Pancreas (tissue), 10 donors: ENCODE measurements at regions of chr11 and their contacts with region 1.

Region 1: GRCh38 chr11:61174949-61175348 is 13.7 kb upstream of the VPS37C start:
- DNase-seq: no peak
- ATAC-seq: peak in 2 of 4 donors; percentile 50 to 59
- H3K4me3 ChIP-seq: no peak overlapping the region
- H3K27ac ChIP-seq: peak overlapping the region in 2 of 4 donors; percentile 32 to 60
- H3K4me1 ChIP-seq: peaks cover 0 to 18% (median 0%) of the 10 kb centered on the region in 3 donors
- H3K27me3 ChIP-seq: no peaks in the 10 kb centered on the region
- CTCF ChIP-seq: no peak

Region 2: DNA sequence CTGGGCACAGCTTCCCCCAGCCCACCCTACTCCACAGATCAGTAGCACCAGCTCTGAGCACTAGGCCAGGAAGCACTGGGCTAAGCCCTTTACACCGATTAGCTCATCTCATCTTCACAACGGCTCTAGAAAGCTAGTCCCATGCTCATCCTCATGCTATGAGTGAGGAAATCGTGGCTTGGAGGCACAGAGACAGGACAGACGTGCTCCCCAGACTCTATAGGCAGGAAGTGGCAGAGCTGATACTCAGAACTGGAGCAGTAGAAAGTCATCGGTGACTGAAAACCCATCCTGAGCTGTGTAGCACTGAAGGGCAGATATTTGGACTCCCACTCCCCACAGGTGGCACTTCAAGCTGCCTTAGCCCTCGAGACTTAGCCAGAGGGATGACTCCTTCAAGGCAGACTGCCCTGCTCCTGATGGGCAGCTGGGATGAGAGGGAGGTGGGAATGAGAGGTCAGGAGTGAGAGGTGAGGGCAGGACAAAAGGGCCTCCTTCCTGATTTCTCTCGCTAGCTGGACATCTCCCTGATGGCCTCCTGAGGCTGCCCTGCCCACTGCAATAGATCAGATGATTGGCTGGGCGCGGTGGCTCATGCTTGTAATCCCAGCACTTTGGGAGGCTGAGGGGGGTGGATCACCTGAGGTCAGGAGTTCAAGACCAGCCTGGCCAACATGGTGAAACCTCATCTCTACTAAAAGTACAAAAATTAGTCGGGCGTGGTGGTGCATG is 63.0 kb before region 1 on chr11:
- intact Hi-C with region 1: no loop called
- DNase-seq: no peak
- ATAC-seq: peak in 1 of 4 donors; percentile 36
- H3K4me3 ChIP-seq: no peak overlapping the region
- H3K27ac ChIP-seq: no peak overlapping the region
- H3K4me1 ChIP-seq: no peaks in the 10 kb centered on the region
- H3K27me3 ChIP-seq: no peaks in the 10 kb centered on the region
- CTCF ChIP-seq: no peak

Region 3: GRCh38 chr11:61138940-61139339 is 36.0 kb before region 1 on chr11:
- intact Hi-C with region 1: loop called in 1 of 3 experiments (anchors 5 kb)
- DNase-seq: peak in 1 of 6 donors; percentile 27
- ATAC-seq: no peak
- H3K4me3 ChIP-seq: no peak overlapping the region
- H3K27ac ChIP-seq: no peak overlapping the region
- H3K4me1 ChIP-seq: peaks cover 0 to 13% (median 10%) of the 10 kb centered on the region in 3 donors
- H3K27me3 ChIP-seq: no peaks in the 10 kb centered on the region
- CTCF ChIP-seq: no peak